H1 (cell line): ENCODE measurements at regions of chrX and their contacts with region 1.

Region 1: DNA sequence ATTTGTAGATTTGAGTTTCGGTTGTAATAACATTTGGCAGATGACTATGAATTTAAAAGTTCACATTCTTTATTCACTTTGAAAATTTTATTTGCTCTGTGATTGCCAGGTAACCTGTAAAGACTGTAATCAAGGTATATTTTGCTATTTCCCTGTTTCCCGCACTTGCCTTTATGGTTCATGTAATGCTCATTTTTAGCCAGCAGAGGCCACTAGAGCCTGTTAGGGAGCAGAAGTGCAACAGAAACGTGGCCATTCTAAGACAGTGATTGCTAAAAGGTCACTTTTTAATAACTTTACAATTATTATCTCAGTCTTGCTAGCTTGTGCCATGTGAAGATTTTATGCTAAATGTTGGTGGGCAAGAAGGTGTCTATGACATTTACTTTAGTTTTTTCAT is 12.4 kb downstream of the YIPF6 start:
- DNase-seq: no peak
- H3K4me3 ChIP-seq: no peak overlapping the region
- H3K27ac ChIP-seq: no peak overlapping the region
- H3K4me1 ChIP-seq: no peaks in the 10 kb centered on the region
- H3K27me3 ChIP-seq: no peaks in the 10 kb centered on the region
- CTCF ChIP-seq: peak in 2 of 3 experiments; percentile 56 to 65; a peak in 3 of 4 replicates
- EP300 ChIP-seq: no peak
- POLR2A ChIP-seq: no peak
- RAD21 ChIP-seq: peak; percentile 74 to 79

Region 2: GRCh38 chrX:68428431-68428830 is 82.8 kb before region 1 on chrX:
- CTCF ChIA-PET with region 1: no interaction called
- POLR2A ChIA-PET with region 1: no interaction called
- DNase-seq: no peak
- H3K4me3 ChIP-seq: no peak overlapping the region
- H3K27ac ChIP-seq: no peak overlapping the region
- H3K4me1 ChIP-seq: no peaks in the 10 kb centered on the region; a peak in 2 of 7 replicates
- H3K27me3 ChIP-seq: no peaks in the 10 kb centered on the region
- CTCF ChIP-seq: no peak
- EP300 ChIP-seq: no peak
- POLR2A ChIP-seq: no peak
- RAD21 ChIP-seq: no peak

Region 3: GRCh38 chrX:68498508-68499379 is 12.5 kb before region 1 on chrX and contains the start of gene YIPF6:
- CTCF ChIA-PET with region 1: interaction called, 3 read pairs
- POLR2A ChIA-PET with region 1: interaction called, 18 read pairs
- DNase-seq: peak; percentile 9 to 66
- H3K4me3 ChIP-seq: peak within 1 kb of the TSS; percentile 76 to 98 (median 89)
- H3K27ac ChIP-seq: peak within 1 kb of the TSS; percentile 97
- H3K4me1 ChIP-seq: no peaks in the 10 kb centered on the region
- H3K27me3 ChIP-seq: no peaks in the 10 kb centered on the region
- CTCF ChIP-seq: no peak
- EP300 ChIP-seq: no peak
- POLR2A ChIP-seq: peak; percentile 84 to 98
- RAD21 ChIP-seq: no peak
- total RNA-seq, gene YIPF6: 34.1 and 37.5 TPM in 2 replicates

Region 4: GRCh38 chrX:68599251-68600152 is 88.2 kb after region 1 on chrX:
- CTCF ChIA-PET with region 1: no interaction called
- POLR2A ChIA-PET with region 1: no interaction called
- DNase-seq: peak in 1 of 2 experiments; percentile 43
- H3K4me3 ChIP-seq: no peak overlapping the region
- H3K27ac ChIP-seq: no peak overlapping the region
- H3K4me1 ChIP-seq: no peaks in the 10 kb centered on the region
- H3K27me3 ChIP-seq: no peaks in the 10 kb centered on the region
- CTCF ChIP-seq: peak in 1 of 3 experiments; percentile 38; a peak in 2 of 4 replicates
- EP300 ChIP-seq: no peak
- POLR2A ChIP-seq: no peak
- RAD21 ChIP-seq: peak; percentile 20 to 34; a peak in 2 of 4 replicates